Activated naive CD8-positive, alpha-beta T cell treated with anti-CD3 and anti-CD28 coated beads, Interleukin-2, amount 10 ng/mL, durations not matched to agents 7 days and 5 days (primary cell): ENCODE measurements at regions of chr4 and their contacts with region 1.

Region 1: DNA sequence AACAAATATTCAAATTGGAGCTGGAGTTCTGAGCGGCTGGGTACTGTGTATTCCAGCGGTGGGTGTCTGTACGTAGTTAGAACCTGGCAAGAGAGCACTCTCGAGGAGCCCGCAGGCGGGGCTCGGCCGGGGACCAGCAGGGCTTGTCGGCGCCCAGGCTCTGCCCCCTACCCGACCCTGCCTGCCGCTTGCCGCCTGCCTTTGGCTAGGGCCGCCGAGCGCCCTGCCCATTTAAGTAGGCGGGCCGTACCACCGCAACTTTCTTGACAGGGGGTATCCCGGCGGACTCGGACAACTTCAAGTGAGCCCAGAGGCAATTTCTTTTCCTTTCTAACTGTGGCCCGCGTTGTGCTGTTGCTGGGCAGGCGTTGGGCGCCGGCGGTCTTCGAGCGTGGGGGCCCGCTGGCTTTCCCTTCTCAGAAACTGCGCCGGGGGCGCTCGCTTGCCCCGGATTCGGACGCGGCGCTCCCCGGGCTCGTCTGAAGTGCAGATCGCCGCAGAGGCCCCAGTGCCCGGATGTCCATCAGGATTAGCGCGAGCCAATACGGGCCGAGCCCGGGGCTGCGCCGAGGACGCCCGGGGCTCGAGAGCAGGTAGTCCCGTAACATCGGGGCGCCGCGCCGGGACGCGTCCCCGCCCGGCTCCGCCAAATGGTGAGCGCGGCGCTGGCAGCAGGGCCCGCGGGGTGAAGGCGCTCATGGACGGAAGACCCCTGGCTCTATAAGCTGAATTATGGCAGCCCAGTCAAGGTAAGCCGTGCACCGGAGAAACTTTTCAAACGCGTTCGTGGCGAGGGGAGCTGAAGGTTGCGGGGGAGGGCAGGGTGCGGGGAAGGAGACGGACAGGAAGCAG is 72.1 kb downstream of the AFF1 start:
- DNase-seq: peak; percentile 93
- ATAC-seq: peak; percentile 87
- H3K4me3 Mint-ChIP-seq: peak overlapping the region; percentile 97
- H3K27ac Mint-ChIP-seq: peak overlapping the region; percentile 98
- H3K4me1 Mint-ChIP-seq: peaks cover 30% of the 10 kb centered on the region
- H3K27me3 Mint-ChIP-seq: no peaks in the 10 kb centered on the region

Region 2: GRCh38 chr4:86918539-86919072 is 88.3 kb before region 1 on chr4:
- POLR2A ChIA-PET with region 1: interaction called, 10 read pairs
- DNase-seq: no peak
- ATAC-seq: no peak
- H3K4me3 Mint-ChIP-seq: no peak overlapping the region
- H3K27ac Mint-ChIP-seq: no peak overlapping the region
- H3K4me1 Mint-ChIP-seq: peaks cover 12% of the 10 kb centered on the region
- H3K27me3 Mint-ChIP-seq: no peaks in the 10 kb centered on the region

Region 3: DNA sequence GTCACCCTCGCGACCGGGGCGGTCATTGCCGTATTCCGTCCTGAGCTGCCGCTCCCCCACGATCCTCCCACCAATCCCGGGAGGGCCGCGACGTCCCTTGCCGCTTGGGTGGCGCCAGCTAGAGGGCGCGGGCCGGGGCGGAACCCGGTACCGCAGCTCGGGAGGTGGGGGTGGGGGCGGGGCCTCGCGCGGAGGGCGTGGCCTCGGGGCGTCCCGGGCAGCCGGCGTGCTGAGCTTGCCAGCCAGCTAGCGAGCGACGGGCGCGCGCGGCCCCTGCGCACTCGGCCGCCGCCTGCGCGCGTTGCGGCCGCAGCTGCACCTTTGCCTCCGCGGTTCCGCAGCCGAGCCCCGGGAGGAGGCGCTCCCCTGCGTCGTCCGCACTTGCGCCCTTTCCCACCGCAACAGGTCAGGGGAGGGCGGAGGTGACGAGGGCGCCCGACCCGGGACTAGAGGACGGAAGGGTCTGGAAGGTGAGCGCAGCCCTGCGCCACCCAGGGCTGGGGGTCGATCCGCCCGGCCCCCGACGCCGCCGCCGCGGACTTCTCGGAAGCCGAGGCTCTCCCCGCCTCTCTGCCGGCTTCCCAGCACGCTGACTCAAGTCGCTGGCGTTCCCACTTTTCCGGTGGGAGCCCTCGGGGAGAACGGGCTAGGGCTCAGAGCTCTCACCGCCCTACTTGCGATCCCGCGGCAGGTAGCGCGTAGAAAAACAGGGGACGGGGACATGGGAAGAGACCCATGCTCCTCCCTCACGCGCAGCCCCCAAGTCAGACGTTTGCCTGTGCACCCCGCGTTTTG is 71.9 kb before region 1 on chr4 and contains the start of gene AFF1:
- POLR2A ChIA-PET with region 1: interaction called, 111 read pairs
- DNase-seq: peak; percentile 88
- ATAC-seq: peak; percentile 80
- H3K4me3 Mint-ChIP-seq: peak within 1 kb of the TSS; percentile 91
- H3K27ac Mint-ChIP-seq: peak within 1 kb of the TSS; percentile 92
- H3K4me1 Mint-ChIP-seq: peaks cover 35% of the 10 kb centered on the region
- H3K27me3 Mint-ChIP-seq: no peaks in the 10 kb centered on the region
- total RNA-seq, gene AFF1: 57.1 to 62.5 TPM

Region 4: GRCh38 chr4:87166296-87166854 is 159.5 kb after region 1 on chr4:
- POLR2A ChIA-PET with region 1: no interaction called
- DNase-seq: no peak
- ATAC-seq: no peak
- H3K4me3 Mint-ChIP-seq: no peak overlapping the region
- H3K27ac Mint-ChIP-seq: no peak overlapping the region
- H3K4me1 Mint-ChIP-seq: no peaks in the 10 kb centered on the region
- H3K27me3 Mint-ChIP-seq: no peaks in the 10 kb centered on the region

Region 5: DNA sequence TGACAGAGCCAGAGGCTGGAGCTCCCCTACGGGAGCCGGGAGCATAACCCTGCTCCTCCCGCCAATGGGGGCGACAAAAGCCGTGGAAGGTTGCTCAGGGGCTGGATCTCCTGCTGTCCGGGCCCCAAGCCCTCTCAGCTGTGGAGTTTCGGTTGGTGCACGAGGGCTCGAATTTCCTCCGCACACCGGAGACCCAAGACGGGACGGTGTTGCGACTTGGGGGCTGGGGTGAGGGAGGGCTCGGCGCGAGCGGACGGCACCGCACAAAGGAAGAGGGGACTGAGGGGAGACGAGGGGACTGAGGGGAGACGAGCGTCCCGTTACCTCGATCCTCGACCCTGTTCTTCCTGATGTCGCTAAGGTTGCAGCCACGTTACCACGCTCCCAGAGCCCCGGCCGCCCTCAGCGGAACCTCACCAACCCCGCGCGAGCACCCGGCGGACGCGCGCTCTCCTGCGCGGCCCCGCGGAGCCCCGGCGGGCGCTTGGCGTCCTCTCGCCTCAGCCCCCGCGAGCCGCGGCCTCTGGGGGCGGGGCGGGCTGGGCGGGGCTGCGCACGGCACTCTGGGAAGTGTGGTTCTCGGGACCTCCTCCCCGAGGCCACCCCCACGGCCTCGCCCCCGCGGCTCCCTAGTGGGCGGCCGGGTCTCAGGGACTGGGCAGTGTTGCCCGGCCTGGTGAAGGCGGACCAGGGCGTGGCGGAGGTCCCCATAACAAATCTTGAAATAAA is 213.4 kb after region 1 on chr4 and contains the start of gene KLHL8:
- POLR2A ChIA-PET with region 1: interaction called, 17 read pairs
- DNase-seq: peak; percentile 95
- ATAC-seq: peak; percentile 91
- H3K4me3 Mint-ChIP-seq: peak within 1 kb of the TSS; percentile 88
- H3K27ac Mint-ChIP-seq: peak within 1 kb of the TSS; percentile 93
- H3K4me1 Mint-ChIP-seq: peaks cover 10% of the 10 kb centered on the region
- H3K27me3 Mint-ChIP-seq: peaks cover 3% of the 10 kb centered on the region
- total RNA-seq, gene KLHL8: 12.6 to 13.7 TPM